Endothelial cell of umbilical vein (primary cell): ENCODE measurements at regions of chr9 and their contacts with region 1.

Region 1: DNA sequence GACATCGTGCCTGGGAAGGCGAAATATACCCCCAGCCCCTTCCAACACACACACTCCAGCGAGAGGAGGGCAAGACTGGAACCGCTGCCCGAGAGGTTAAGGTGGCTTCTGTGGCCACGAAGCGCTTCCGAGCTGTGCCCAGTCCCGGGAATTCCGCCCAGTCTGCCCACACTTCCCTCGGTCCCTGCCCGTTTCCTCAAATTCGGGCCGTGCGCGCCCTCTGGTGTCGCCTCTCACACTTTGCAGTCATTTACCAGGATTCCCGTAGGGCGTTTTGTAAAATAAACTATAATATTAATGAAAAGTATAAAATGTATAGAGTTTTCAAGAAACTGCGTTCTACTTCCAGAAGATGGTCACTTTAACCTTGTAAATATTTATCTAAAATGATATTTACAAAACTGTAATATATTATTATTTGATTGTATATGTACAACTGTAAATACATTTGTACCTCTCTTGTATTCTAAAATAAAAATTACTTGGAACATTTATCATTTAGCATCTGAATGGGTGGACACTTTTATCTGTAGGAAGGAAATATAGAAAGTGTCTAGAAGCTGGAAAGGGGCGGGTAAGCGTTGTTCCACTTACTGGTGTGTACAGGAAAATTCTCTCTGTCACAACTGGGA is 11.0 kb upstream of the EXOSC2 start:
- DNase-seq: peak; percentile 73
- H3K4me3 ChIP-seq: no peak overlapping the region
- H3K27ac ChIP-seq: no peak overlapping the region
- H3K4me1 ChIP-seq: peaks cover 11% of the 10 kb centered on the region
- H3K27me3 ChIP-seq: peaks cover 0 to 3% of the 10 kb centered on the region in 2 experiments
- CTCF ChIP-seq: peak; percentile 73 to 77
- POLR2A ChIP-seq: no peak

Region 2: DNA sequence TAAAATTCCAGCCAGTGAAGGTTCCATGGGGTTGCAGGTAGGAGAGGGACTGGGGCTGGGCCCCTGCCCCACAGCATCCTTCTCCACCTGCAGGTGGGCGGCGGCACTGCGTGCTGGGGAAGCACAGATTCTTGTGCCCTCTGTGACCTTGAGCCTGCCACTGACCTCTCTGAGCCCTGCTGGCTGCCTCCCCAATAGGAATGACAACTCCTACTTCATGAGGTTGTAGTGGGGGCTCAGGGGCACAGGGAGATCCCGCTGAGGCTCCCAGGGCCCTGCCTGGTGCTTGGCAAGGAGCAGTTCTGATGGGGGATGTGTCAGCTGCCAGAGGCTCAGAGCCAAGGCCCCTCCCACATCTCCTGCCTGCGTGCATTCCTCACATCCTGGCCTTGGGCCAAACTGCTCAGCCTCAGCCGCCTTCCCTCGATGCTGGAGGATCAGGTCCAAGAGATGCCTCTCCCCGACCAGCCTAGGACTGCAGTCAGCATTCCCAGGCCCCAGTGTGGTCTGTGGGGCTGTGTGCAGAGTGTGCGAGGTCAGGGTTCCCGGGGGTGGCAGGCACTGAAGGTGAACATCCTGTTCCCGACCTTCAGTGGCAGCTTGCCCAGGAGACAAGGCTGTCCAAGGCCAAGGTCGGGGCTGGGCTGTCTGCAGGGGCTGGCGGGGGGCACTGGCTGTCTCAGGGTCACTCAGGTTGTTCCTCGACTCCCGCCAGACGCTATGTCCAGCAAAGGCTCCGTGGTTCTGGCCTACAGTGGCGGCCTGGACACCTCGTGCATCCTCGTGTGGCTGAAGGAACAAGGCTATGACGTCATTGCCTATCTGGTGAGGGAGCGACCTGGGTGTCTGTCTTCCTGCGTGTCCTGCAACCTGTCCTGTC is 230.9 kb before region 1 on chr9:
- CTCF ChIA-PET with region 1: interaction called, 163 read pairs
- POLR2A ChIA-PET with region 1: no interaction called
- dilution Hi-C with region 1: no loop called
- intact Hi-C with region 1: no loop called
- DNase-seq: peak; percentile 93
- H3K4me3 ChIP-seq: no peak overlapping the region
- H3K27ac ChIP-seq: no peak overlapping the region
- H3K4me1 ChIP-seq: peaks cover 30% of the 10 kb centered on the region
- H3K27me3 ChIP-seq: peaks cover 0 to 2% of the 10 kb centered on the region in 2 experiments
- CTCF ChIP-seq: peak; percentile 58 to 74
- POLR2A ChIP-seq: no peak

Region 3: DNA sequence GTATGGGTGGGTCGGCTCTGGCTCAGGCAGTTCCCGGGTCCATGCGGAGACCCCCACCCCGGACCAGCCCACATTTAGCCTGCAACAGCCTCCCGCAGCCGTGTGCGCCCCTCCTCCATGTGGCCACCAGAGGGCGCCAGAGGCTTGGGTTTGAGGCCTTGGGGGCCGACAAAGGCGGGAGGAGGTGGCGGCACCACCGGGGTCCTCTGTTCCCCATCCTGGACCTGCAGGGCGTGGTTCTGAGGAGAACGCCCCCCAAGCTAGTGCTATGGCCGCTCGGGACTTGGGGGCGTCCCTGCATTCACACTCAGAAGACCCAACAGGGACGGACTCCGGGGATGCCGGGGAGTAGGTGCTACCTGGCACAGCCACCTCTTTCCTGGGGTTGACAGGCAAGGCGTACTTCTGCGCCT is 221.4 kb before region 1 on chr9:
- CTCF ChIA-PET with region 1: interaction called, 163 read pairs
- POLR2A ChIA-PET with region 1: no interaction called
- dilution Hi-C with region 1: no loop called
- intact Hi-C with region 1: loop called (anchors 1 kb)
- DNase-seq: peak; percentile 28
- H3K4me3 ChIP-seq: no peak overlapping the region
- H3K27ac ChIP-seq: no peak overlapping the region
- H3K4me1 ChIP-seq: no peaks in the 10 kb centered on the region
- H3K27me3 ChIP-seq: no peaks in the 10 kb centered on the region
- CTCF ChIP-seq: peak; percentile 66 to 93
- POLR2A ChIP-seq: no peak

Region 4: DNA sequence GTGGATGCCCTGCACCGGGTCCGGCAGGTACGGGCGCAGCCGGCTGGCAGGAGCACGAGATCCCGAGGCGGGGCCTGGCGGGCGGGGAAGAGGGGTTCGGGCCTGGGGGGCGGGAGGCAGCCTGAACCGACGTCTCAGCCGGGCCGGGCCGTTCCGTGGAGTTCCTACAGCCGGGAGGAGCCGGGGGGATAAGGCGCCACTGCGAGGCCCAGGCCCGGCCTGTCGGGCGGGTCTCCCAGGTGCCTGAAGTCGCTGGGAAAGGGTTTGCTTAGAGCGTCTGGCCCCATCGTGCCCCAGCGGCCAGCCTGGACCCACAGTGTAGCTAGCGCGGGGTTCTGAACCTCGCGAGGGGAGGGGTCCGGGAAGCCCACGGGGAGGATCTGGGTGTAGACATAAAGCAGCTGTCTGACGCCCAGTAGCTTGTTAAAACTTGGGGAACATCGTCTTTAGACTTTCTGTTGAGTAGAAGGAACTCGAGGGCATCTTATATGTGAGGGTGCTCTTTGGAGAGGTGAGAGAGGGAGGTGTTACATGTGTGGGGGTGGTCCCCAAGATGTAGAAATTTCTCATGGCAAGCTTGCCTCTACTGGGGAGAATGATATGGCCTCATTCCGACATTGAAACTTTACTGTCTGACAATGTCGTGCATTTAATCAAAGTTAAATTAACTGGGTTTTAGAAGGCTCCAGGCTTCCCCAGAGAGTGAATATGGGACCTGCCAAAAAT is 102.7 kb before region 1 on chr9:
- CTCF ChIA-PET with region 1: no interaction called
- POLR2A ChIA-PET with region 1: no interaction called
- dilution Hi-C with region 1: no loop called
- intact Hi-C with region 1: loop called (anchors 5 kb)
- DNase-seq: no peak
- H3K4me3 ChIP-seq: peak overlapping the region; percentile 57 to 91 (median 64)
- H3K27ac ChIP-seq: peak overlapping the region; percentile 60
- H3K4me1 ChIP-seq: peaks cover 8% of the 10 kb centered on the region
- H3K27me3 ChIP-seq: peaks cover 3 to 7% of the 10 kb centered on the region in 2 experiments
- CTCF ChIP-seq: no peak
- POLR2A ChIP-seq: no peak

Region 5: GRCh38 chr9:130693426-130694191 is 11.0 kb after region 1 on chr9 and contains the start of gene EXOSC2:
- CTCF ChIA-PET with region 1: interaction called, 23 read pairs
- POLR2A ChIA-PET with region 1: no interaction called
- dilution Hi-C with region 1: no loop called
- intact Hi-C with region 1: no loop called
- DNase-seq: peak; percentile 99
- H3K4me3 ChIP-seq: peak within 1 kb of the TSS; percentile 57 to 79 (median 78)
- H3K27ac ChIP-seq: peak within 1 kb of the TSS; percentile 47
- H3K4me1 ChIP-seq: peaks cover 9% of the 10 kb centered on the region
- H3K27me3 ChIP-seq: no peaks in the 10 kb centered on the region
- CTCF ChIP-seq: no peak
- POLR2A ChIP-seq: peak; percentile 98
- total RNA-seq, gene EXOSC2: 44.4 and 46.4 TPM in 2 replicates

Region 6: DNA sequence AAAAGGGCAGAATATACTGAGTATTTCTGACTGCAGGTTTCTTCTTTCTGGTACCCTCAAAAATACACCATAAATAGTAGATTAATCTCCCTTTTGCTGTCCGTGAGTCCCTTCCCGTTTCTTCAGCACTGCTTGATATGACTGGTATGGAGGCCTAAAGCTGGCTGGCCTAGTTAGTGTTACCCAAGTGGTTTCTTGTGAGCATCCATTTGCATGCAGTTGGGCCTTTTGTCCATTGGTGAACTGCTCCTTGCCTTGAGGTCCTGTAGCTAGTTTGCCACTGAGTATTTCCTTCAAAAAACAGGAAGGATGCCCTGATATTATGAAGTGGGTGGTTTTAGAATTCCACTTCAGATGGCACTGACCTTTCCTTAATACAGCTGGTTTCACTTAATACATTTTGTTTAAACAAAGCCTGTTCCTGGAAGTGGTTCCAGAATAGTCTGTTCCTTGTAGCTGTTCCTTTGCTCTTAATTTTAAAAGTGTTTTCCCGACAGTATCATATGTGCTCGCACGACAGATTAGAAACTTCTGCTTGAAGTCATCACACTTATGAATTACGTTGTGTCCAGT is 112.4 kb after region 1 on chr9:
- CTCF ChIA-PET with region 1: no interaction called
- POLR2A ChIA-PET with region 1: no interaction called
- dilution Hi-C with region 1: no loop called
- intact Hi-C with region 1: no loop called
- DNase-seq: peak; percentile 22
- H3K4me3 ChIP-seq: no peak overlapping the region
- H3K27ac ChIP-seq: peak overlapping the region; percentile 54
- H3K4me1 ChIP-seq: peaks cover 27% of the 10 kb centered on the region
- H3K27me3 ChIP-seq: no peaks in the 10 kb centered on the region
- CTCF ChIP-seq: no peak
- POLR2A ChIP-seq: no peak